Left cardiac atrium (tissue), 4 donors: ENCODE measurements at regions of chr21 and their contacts with region 1.

Region 1: GRCh38 chr21:21163904-21164303 is 165.7 kb downstream of the NCAM2 start:
- DNase-seq: peak; percentile 37
- ATAC-seq: peak; percentile 39 to 55

Region 2: DNA sequence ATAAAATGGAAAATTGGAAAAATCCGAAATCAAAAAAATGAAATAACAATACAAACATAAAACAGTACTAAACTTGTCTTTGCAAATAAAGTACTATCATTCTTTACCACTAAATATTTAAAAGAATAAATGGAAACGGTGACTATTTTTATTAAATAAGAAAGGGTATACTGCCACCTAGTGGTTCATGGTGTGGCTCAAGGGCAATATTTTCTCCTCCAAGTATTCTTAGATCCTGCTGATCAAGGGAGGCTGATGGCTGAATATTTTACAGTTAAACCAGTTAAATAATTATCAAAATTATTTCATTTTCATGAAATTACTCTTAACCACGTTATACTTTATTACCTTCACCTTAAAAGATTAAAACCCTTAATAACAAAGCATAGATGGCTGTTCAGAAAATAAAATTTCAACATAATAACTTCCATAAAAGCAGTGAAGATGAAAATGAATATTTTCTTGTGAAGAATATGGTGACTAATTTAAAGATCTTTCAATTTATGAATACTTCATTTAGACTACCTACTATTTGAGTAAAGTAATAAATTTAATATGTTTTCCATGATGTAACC is 1628.2 kb after region 1 on chr21:
- intact Hi-C with region 1: loop called in 1 of 2 experiments (anchors 5 kb)
- DNase-seq: no peak
- ATAC-seq: no peak